ENCODE measurements at regions of chr7 and their contacts with region 1.

Region 1: GRCh38 chr7:11533229-11533820 is 298.7 kb downstream of the THSD7A start:
- DNase-seq: no peak
- H3K4me3 ChIP-seq: no peak overlapping the region
- H3K27ac ChIP-seq: no peak overlapping the region
- H3K4me1 ChIP-seq: no peaks in the 10 kb centered on the region
- H3K27me3 ChIP-seq: no peaks in the 10 kb centered on the region
- CTCF ChIP-seq: no peak
- EP300 ChIP-seq: no peak
- POLR2A ChIP-seq: no peak

Region 2: GRCh38 chr7:11163220-11163619 is 370.1 kb before region 1 on chr7:
- in situ Hi-C with region 1: no loop called
- intact Hi-C with region 1: loop called (anchors 5 kb)
- DNase-seq: no peak
- H3K4me3 ChIP-seq: no peak overlapping the region
- H3K27ac ChIP-seq: no peak overlapping the region
- H3K4me1 ChIP-seq: no peaks in the 10 kb centered on the region
- H3K27me3 ChIP-seq: no peaks in the 10 kb centered on the region
- CTCF ChIP-seq: no peak
- EP300 ChIP-seq: no peak
- POLR2A ChIP-seq: no peak

Measured in transverse colon (tissue), 4 donors.